ENCODE measurements at regions of chr16 and their contacts with region 1.

Region 1: DNA sequence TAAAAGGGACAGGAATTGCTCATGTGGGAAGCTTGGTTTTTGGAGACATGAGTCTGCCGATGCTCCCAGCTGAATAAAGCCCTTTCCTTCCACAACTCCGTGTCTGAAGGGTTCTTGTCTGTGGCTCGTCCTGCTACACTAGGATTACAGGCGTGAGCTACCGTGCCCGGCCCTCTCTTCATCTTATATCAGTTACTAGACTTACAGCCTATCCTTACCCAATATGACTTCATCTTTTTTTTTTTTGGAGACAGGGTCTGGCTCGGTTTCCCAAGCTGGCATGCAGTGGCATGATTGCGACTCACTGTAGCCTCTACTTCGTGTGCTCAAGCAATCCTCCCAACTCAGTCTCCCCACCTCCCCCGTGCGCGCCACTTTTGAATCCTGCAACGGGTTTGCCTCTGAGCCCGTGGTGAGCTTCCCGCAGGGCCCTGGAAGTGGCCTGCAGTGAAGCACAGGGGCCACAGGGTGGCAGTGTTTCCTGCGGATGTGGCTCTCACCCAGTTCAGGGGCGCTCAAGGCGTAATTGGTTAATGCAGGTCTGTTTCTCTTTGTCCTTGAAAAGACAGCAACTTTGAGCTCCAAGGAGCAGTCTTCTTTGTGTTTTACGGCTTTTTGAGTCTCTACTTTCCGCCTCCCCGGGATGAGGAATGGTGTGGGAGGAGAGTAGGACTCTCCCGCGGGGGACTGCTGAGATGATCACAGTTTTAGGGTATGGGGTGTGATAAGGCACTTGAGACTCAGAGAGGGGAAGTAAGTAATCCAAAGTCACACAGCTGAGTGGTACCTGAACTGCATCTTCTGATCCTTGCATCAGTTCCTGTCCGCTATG is 22.7 kb upstream of the GPRC5B start:
- DNase-seq: peak; percentile 49 to 80 (median 73)
- ATAC-seq: peak; percentile 99
- H3K4me3 ChIP-seq: peak overlapping the region; percentile 21
- H3K4me3 Mint-ChIP-seq: peak overlapping the region; percentile 23 to 79 (median 72)
- H3K27ac ChIP-seq: no peak overlapping the region
- H3K27ac Mint-ChIP-seq: peak overlapping the region in 4 of 9 donors; percentile 23 to 84 (median 34)
- H3K4me1 ChIP-seq: no peaks in the 10 kb centered on the region
- H3K4me1 Mint-ChIP-seq: peaks cover 7 to 12% (median 10%) of the 10 kb centered on the region in 7 donors
- H3K27me3 ChIP-seq: no peaks in the 10 kb centered on the region
- H3K27me3 Mint-ChIP-seq: peaks cover 10 to 20% (median 14%) of the 10 kb centered on the region in 5 donors

Region 2: GRCh38 chr16:19432429-19432828 is 474.9 kb before region 1 on chr16:
- CTCF ChIA-PET with region 1: no interaction called
- POLR2A ChIA-PET with region 1: no interaction called
- intact Hi-C with region 1: no loop called
- DNase-seq: no peak
- ATAC-seq: no peak
- H3K4me3 ChIP-seq: no peak overlapping the region
- H3K4me3 Mint-ChIP-seq: no peak overlapping the region
- H3K27ac ChIP-seq: no peak overlapping the region
- H3K27ac Mint-ChIP-seq: no peak overlapping the region
- H3K4me1 ChIP-seq: no peaks in the 10 kb centered on the region
- H3K4me1 Mint-ChIP-seq: peaks cover 0 to 7% (median 0%) of the 10 kb centered on the region in 7 donors
- H3K27me3 ChIP-seq: no peaks in the 10 kb centered on the region
- H3K27me3 Mint-ChIP-seq: peaks cover 4 to 15% (median 11%) of the 10 kb centered on the region in 5 donors

Region 3: DNA sequence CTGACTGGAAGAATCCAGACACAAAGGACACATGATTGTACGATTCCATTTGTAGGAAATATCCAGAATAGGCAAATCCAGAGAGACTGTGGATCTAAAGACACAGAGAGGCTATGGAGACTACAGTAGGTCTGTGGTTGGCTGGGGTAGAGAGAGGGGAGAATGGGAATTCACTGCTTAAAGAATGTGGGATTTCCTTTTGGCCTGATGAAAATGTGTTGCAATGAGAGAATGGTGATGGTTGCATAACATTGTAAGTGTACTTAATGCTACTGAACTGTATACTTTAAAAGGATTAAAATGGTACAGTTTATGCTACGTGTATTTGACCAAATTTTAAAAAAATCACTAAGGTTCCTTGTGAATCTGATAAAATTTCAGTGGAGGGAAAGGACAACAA is 84.8 kb before region 1 on chr16:
- CTCF ChIA-PET with region 1: no interaction called
- POLR2A ChIA-PET with region 1: no interaction called
- intact Hi-C with region 1: no loop called
- DNase-seq: no peak
- ATAC-seq: no peak
- H3K4me3 ChIP-seq: no peak overlapping the region
- H3K4me3 Mint-ChIP-seq: no peak overlapping the region
- H3K27ac ChIP-seq: no peak overlapping the region
- H3K27ac Mint-ChIP-seq: no peak overlapping the region
- H3K4me1 ChIP-seq: no peaks in the 10 kb centered on the region
- H3K4me1 Mint-ChIP-seq: peaks cover 0 to 8% (median 0%) of the 10 kb centered on the region in 7 donors
- H3K27me3 ChIP-seq: no peaks in the 10 kb centered on the region
- H3K27me3 Mint-ChIP-seq: no peaks in the 10 kb centered on the region

Region 4: GRCh38 chr16:20300312-20301097 is 393.1 kb after region 1 on chr16:
- CTCF ChIA-PET with region 1: no interaction called
- POLR2A ChIA-PET with region 1: no interaction called
- intact Hi-C with region 1: loop called in 1 of 2 experiments (anchors 1 kb)
- DNase-seq: peak in 6 of 9 donors; percentile 3 to 33 (median 6)
- ATAC-seq: peak; percentile 47
- H3K4me3 ChIP-seq: no peak overlapping the region
- H3K4me3 Mint-ChIP-seq: no peak overlapping the region
- H3K27ac ChIP-seq: no peak overlapping the region
- H3K27ac Mint-ChIP-seq: no peak overlapping the region
- H3K4me1 ChIP-seq: no peaks in the 10 kb centered on the region
- H3K4me1 Mint-ChIP-seq: no peaks in the 10 kb centered on the region
- H3K27me3 ChIP-seq: no peaks in the 10 kb centered on the region
- H3K27me3 Mint-ChIP-seq: peaks cover 0 to 38% (median 22%) of the 10 kb centered on the region in 5 donors

Region 5: GRCh38 chr16:20383106-20384029 is 476.0 kb after region 1 on chr16:
- CTCF ChIA-PET with region 1: interaction called, 7 read pairs
- POLR2A ChIA-PET with region 1: no interaction called
- intact Hi-C with region 1: loop called in 1 of 2 experiments (anchors 1 kb)
- DNase-seq: peak in 7 of 9 donors; percentile 3 to 54 (median 37)
- ATAC-seq: peak; percentile 67
- H3K4me3 ChIP-seq: no peak overlapping the region
- H3K4me3 Mint-ChIP-seq: peak overlapping the region in 1 of 10 donors; percentile 22
- H3K27ac ChIP-seq: no peak overlapping the region
- H3K27ac Mint-ChIP-seq: no peak overlapping the region
- H3K4me1 ChIP-seq: peaks cover 0 to 4% of the 10 kb centered on the region in 2 donors
- H3K4me1 Mint-ChIP-seq: peaks cover 0 to 6% (median 0%) of the 10 kb centered on the region in 7 donors
- H3K27me3 ChIP-seq: no peaks in the 10 kb centered on the region
- H3K27me3 Mint-ChIP-seq: peaks cover 11 to 29% (median 19%) of the 10 kb centered on the region in 5 donors

Measured in naive thymus-derived CD4-positive, alpha-beta T cell (primary cell).